ENCODE measurements at regions of chr12 and their contacts with region 1.

Region 1: DNA sequence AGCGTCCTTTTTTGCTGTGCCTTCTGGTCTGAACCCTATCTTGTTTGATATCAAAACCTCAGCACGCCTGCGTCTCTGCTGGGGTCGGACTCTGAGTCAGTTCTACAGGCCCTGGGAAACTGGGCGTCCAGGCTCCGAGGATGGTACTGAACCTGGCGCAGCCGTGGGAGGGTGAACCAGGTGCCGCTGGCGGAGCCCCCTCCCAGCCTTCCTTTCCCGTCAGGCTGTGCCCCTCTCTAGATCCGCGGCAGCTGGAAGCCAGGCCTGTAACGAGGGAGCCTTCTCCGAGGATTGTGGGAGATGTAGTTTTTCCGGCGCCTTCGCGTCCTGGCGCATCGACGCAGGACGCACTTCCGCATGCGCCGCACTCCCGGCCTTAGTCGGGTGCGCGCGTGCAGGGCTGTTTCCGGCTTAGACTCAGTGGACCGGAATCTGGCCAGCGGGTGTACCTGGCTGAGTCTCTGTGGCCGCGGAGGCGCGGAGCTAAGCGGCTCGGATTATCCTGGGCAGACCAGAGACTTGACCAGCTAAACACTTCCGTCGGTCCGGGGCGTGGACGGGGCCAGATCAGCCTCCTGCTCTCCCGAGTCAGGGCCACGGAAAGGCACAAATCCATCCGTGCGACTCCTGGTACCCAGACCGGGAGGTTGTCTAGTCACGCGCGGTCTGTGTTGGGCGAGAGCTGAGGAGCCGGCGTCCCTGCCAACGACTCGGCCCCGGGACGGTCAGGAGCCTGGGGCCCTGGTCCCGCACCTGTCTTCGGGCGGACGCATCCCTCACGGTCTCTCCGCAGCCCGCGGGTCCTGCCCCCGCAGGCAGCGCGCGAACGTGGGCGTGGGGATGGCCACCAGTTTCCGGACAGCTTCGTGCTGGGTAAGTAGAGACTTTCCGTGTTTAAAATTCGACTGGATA is at the start of gene ZNF26:
- DNase-seq: peak; percentile 91 to 92
- H3K4me3 ChIP-seq: peak within 1 kb of the TSS; percentile 64 to 94 (median 91)
- H3K27ac ChIP-seq: peak within 1 kb of the TSS; percentile 71 to 77 (median 73)
- H3K4me1 ChIP-seq: peaks cover 9 to 17% of the 10 kb centered on the region in 2 donors
- H3K27me3 ChIP-seq: no peaks in the 10 kb centered on the region
- CTCF ChIP-seq: no peak
- POLR2A ChIP-seq: peak in 1 of 2 donors; percentile 71
- total RNA-seq, gene ZNF26: 10.3 to 25.4 (median 16.4) TPM

Region 2: DNA sequence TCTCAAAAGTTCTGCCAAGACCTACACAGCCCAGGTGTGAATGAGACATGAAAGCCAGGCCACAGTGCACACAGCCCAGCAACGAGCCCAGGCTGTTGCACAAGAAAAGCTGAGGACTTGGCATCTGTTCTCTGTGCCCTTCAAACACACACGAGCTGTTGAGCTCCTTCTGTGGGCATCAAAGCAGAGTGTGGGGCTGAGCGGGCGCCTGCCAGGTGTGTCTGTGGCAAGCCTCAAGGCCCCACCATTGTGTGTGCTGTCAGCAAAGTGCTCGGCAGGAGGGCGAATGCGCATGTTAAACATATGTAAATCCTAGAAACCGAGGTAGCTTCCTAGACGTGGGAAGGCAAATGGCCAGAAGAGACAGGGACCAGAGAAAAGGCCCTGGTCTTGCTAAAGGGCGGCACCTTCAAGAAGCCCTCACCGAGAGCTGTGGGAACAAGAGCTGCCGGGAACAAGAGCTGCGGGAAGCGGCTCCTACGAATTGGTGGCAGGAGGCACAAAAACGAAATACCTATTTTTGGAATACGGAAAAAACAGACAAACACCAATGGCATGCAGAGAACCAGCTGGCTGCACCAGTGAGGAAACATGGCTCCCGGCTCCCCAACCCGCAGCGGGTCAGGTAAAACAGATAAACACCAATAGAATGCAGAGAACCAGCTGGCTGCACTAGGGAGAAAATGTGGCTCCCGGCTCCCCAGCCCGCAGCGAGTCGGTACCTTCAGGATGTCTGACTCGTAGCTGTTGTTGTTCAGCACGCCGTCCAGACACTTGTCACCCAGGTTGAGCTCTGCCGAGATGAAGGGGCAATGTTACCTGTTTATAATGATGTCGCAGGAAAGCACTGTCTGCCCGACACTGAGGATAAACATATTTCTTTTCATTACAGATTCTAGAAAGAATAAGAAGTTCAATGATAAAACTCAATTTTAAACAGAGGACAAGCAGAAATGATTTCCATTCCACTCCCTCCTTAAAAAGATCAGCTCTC is 138.6 kb before region 1 on chr12:
- intact Hi-C with region 1: no loop called
- DNase-seq: no peak
- H3K4me3 ChIP-seq: no peak overlapping the region
- H3K27ac ChIP-seq: no peak overlapping the region
- H3K4me1 ChIP-seq: no peaks in the 10 kb centered on the region
- H3K27me3 ChIP-seq: no peaks in the 10 kb centered on the region
- CTCF ChIP-seq: no peak
- POLR2A ChIP-seq: no peak

Region 3: GRCh38 chr12:132899033-132899432 is 87.2 kb before region 1 on chr12:
- intact Hi-C with region 1: no loop called
- DNase-seq: no peak
- H3K4me3 ChIP-seq: no peak overlapping the region
- H3K27ac ChIP-seq: no peak overlapping the region
- H3K4me1 ChIP-seq: no peaks in the 10 kb centered on the region
- H3K27me3 ChIP-seq: no peaks in the 10 kb centered on the region
- CTCF ChIP-seq: no peak
- POLR2A ChIP-seq: no peak

Region 4: DNA sequence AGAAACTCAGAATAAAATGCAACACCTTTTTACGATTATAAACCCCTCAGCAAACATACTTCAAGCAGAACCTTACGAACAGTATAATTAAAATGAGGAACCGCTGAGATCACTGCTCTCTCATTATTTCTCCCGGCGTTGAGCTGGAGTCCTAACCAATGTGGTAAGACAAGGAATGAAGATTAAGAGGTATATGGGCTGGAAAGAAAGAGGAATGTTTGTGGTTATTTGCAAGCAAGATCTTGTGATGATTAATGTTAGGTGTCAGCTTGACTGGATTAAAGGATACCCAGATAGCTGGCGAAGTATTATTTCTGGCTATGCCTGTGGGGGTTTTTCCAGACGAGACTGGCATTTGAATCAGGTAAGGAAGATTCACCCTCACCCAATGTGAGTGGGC is 40.7 kb after region 1 on chr12:
- intact Hi-C with region 1: no loop called
- DNase-seq: no peak
- H3K4me3 ChIP-seq: no peak overlapping the region
- H3K27ac ChIP-seq: no peak overlapping the region
- H3K4me1 ChIP-seq: no peaks in the 10 kb centered on the region
- H3K27me3 ChIP-seq: no peaks in the 10 kb centered on the region
- CTCF ChIP-seq: no peak
- POLR2A ChIP-seq: no peak

Region 5: DNA sequence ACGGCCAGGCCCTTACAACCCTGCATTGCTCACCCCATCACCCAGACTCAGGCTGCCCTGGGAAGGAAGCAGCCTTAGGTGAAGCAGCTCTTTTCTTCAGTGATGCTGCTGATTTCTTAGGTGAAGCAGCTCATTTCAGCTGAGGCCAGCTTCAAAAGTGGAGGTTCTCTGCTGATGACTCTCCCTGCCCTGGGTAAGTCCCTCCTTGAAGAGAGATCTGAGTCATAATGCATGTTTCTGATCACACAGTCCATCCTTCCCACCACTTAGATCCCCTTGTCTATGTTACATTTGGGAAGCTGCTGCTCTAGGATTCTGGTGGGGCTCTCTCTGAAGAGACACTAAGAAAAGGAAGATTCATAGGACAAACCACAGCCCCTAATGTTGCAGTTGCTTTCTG is 77.3 kb after region 1 on chr12:
- intact Hi-C with region 1: no loop called
- DNase-seq: no peak
- H3K4me3 ChIP-seq: no peak overlapping the region
- H3K27ac ChIP-seq: no peak overlapping the region
- H3K4me1 ChIP-seq: no peaks in the 10 kb centered on the region
- H3K27me3 ChIP-seq: no peaks in the 10 kb centered on the region
- CTCF ChIP-seq: no peak
- POLR2A ChIP-seq: no peak

Region 6: DNA sequence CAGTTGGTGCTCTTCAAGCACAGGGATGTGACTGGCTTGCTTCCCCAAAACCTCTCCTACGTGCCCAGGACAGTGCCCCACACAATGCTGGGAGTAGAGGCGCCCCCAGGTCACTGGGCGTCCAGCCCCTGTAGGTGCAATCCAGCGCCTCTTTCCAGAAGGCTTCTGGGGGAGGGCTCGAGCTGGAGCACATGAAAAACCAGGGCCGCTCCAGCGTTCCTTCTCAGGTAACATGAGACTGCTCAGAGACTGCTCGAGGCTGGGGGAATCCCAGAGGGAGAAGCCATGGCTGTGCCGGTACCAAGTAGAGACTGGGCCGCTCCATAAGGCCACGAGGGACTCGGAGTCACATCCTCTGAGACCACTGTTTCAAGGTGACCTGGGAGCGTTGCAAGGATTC is 91.9 kb after region 1 on chr12:
- intact Hi-C with region 1: loop called (anchors 5 kb)
- DNase-seq: no peak
- H3K4me3 ChIP-seq: no peak overlapping the region
- H3K27ac ChIP-seq: no peak overlapping the region
- H3K4me1 ChIP-seq: peaks cover 12 to 17% of the 10 kb centered on the region in 2 donors
- H3K27me3 ChIP-seq: no peaks in the 10 kb centered on the region
- CTCF ChIP-seq: no peak
- POLR2A ChIP-seq: no peak

Measured in thyroid gland (tissue), 4 donors.